Activated naive CD4-positive, alpha-beta T cell treated with anti-CD3 and anti-CD28 coated beads, Interleukin-2, amount 10 ng/mL, durations not matched to agents 7 days and 5 days (primary cell): ENCODE measurements at regions of chr12 and their contacts with region 1.

Region 1: DNA sequence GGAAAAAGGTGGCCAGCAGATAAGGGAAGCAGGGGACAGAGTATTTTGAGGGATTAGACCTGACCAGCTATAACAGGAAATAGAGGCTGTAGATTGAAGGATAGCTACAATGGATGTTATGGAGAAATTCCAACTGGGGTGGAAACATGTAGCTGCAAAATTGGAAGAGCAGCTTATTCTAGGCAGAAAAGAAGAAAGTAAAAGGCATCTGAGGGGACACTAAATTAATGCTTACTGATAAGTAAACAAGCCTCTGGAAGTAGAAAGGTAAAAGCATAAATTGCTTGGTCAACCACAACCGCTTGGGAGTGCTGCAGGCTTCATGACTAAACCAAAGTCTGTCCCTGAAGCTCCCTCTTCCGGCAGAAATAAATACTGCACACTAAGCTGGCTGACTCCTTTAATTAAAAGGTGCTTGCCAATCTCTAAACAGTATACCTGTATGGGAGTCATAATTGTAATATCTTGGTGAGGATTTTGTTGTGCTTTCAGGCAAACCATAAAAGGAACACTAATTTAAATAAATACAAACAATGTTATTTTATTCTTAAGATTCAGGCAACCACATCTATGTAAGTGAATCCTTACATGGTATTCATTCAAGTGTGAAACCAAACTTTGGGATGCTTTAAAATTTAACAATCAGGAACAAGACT is 7.7 kb downstream of the UBC start:
- DNase-seq: peak; percentile 94
- H3K4me3 Mint-ChIP-seq: no peak overlapping the region
- H3K27ac Mint-ChIP-seq: no peak overlapping the region
- H3K4me1 Mint-ChIP-seq: peaks cover 32% of the 10 kb centered on the region
- H3K27me3 Mint-ChIP-seq: peaks cover 7% of the 10 kb centered on the region

Region 2: GRCh38 chr12:124917135-124917840 is 10.6 kb after region 1 on chr12:
- CTCF ChIA-PET with region 1: interaction called, 26 read pairs
- DNase-seq: peak; percentile 97
- H3K4me3 Mint-ChIP-seq: peak overlapping the region; percentile 99
- H3K27ac Mint-ChIP-seq: peak overlapping the region; percentile 100
- H3K4me1 Mint-ChIP-seq: peaks cover 87% of the 10 kb centered on the region
- H3K27me3 Mint-ChIP-seq: peaks cover 12% of the 10 kb centered on the region

Region 3: GRCh38 chr12:124927201-124928094 is 20.7 kb after region 1 on chr12:
- CTCF ChIA-PET with region 1: interaction called, 13 read pairs
- DNase-seq: peak; percentile 93
- H3K4me3 Mint-ChIP-seq: peak overlapping the region; percentile 86
- H3K27ac Mint-ChIP-seq: peak overlapping the region; percentile 95
- H3K4me1 Mint-ChIP-seq: peaks cover 41% of the 10 kb centered on the region
- H3K27me3 Mint-ChIP-seq: peaks cover 19% of the 10 kb centered on the region

Region 4: GRCh38 chr12:124980098-124980892 is 73.6 kb after region 1 on chr12:
- CTCF ChIA-PET with region 1: no interaction called
- DNase-seq: no peak
- H3K4me3 Mint-ChIP-seq: no peak overlapping the region
- H3K27ac Mint-ChIP-seq: no peak overlapping the region
- H3K4me1 Mint-ChIP-seq: no peaks in the 10 kb centered on the region
- H3K27me3 Mint-ChIP-seq: no peaks in the 10 kb centered on the region

Region 5: DNA sequence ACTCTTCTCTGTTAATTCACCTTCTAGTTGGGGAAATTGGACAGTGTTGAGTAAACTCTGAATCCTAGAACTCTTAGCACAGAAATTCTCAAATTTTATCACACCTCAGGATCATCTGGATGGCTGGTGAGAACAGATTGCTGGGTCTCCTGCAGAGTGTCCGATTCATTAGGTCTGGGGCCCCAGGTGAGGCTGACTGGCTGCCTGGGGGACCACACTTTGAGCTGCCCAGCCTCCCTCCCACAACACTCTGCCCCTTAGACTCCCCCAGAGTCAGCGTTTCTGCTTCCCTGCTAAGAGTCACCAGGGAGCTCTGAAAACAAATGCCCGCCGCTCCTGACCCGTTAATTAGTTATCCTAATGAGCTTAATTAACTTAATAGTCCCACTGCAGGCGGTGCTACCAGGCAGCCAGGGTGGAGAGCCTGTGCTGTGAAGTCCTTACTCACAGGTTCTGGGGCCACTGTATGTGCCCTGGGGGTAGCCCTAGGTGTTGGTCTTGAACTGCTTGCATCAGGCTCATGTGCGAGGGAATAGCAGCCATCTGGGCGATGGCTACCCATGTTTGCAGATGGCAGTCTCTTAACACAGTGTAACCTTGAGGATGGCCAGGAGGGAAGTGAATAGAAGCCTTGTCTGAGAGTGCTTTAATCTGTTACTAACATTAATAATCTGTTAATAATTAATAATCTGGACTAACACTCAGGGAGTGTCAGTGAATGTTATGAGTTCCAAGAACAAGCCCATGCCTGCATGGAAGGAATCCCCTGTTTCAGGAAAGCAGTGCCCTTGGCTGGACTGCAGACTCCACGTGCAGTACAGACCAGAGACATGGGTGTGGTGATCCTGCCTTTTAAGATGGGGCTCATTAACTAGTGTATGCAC is 194.1 kb after region 1 on chr12:
- CTCF ChIA-PET with region 1: no interaction called
- DNase-seq: no peak
- H3K4me3 Mint-ChIP-seq: no peak overlapping the region
- H3K27ac Mint-ChIP-seq: no peak overlapping the region
- H3K4me1 Mint-ChIP-seq: peaks cover 7% of the 10 kb centered on the region
- H3K27me3 Mint-ChIP-seq: no peaks in the 10 kb centered on the region